BJ (cell line): ENCODE measurements at regions of chr11 and their contacts with region 1.

Region 1: GRCh38 chr11:34357701-34358257 is at the start of gene ABTB2:
- DNase-seq: peak; percentile 77
- H3K4me3 ChIP-seq: peak within 1 kb of the TSS; percentile 61
- H3K27me3 ChIP-seq: no peaks in the 10 kb centered on the region; the same call in 1 of the 2 replicates
- CTCF ChIP-seq: no peak
- polyA plus RNA-seq, gene ABTB2: 2.8 and 6.3 TPM in 2 replicates

Region 2: GRCh38 chr11:34180040-34180813 is 177.6 kb before region 1 on chr11:
- CTCF ChIA-PET with region 1: interaction called, 112 read pairs
- POLR2A ChIA-PET with region 1: no interaction called
- DNase-seq: no peak
- H3K4me3 ChIP-seq: no peak overlapping the region
- H3K27me3 ChIP-seq: no peaks in the 10 kb centered on the region
- CTCF ChIP-seq: no peak

Region 3: DNA sequence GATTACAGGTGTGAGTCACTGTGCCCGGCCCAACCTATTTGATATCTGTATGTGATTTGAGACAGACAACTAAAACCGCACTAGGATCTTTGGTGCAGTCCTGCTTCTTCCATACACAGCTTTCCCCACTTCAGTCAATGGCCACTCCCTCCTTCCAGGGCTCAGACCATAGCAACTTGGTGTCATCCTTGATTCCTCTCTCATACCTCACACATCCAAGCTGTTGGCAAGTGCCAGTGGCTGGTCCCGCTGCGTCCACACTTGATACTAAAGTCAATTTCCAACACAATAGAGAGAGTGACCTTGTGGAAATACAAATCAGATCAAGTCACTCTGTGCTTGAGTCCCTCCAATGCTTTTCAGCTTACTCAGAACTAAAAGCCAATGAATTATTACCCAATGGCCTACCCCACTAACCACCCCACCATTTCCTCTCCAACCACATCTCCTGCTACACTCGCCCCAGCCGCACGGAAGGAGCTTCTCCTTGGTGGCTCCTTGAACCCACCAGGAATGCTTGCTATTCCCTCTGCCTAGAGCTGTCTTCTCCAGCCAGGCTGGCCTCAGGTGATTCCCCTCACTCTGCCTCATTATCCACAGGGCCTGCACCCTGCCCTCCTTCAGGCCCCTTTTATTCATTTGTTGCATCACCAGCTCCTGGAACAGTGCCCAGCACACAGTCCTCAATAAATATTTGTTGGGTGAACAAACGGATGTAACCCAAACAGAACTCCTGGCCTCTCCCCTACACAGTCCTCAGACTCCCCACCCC is 12.8 kb before region 1 on chr11:
- CTCF ChIA-PET with region 1: interaction called, 33 read pairs
- POLR2A ChIA-PET with region 1: interaction called, 4 read pairs
- DNase-seq: peak; percentile 88
- H3K4me3 ChIP-seq: no peak overlapping the region
- H3K27me3 ChIP-seq: no peaks in the 10 kb centered on the region
- CTCF ChIP-seq: no peak

Region 4: DNA sequence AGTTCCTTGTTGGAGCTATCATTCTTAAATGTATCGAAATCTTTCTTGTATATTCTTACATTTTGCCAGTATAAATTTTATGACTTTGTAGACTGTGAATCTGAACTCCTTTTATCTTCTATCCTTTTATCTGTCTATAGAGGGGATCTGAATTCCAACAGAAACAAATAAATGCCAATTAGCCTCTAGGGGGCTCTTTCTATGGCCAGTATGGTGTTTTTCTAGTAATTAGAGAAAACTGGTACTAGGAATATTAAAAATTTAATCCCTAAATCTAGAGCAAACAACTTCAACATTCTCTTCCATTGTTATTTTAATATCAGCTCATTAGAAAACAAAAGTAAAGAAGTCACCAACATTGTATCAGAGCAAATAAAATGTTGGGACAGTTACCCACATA is 59.4 kb after region 1 on chr11:
- CTCF ChIA-PET with region 1: no interaction called
- POLR2A ChIA-PET with region 1: no interaction called
- DNase-seq: no peak
- H3K4me3 ChIP-seq: no peak overlapping the region
- H3K27me3 ChIP-seq: peaks cover 3% of the 10 kb centered on the region; the same call in 1 of the 2 replicates
- CTCF ChIP-seq: no peak